ENCODE measurements at regions of chr6 and their contacts with region 1.

Region 1: DNA sequence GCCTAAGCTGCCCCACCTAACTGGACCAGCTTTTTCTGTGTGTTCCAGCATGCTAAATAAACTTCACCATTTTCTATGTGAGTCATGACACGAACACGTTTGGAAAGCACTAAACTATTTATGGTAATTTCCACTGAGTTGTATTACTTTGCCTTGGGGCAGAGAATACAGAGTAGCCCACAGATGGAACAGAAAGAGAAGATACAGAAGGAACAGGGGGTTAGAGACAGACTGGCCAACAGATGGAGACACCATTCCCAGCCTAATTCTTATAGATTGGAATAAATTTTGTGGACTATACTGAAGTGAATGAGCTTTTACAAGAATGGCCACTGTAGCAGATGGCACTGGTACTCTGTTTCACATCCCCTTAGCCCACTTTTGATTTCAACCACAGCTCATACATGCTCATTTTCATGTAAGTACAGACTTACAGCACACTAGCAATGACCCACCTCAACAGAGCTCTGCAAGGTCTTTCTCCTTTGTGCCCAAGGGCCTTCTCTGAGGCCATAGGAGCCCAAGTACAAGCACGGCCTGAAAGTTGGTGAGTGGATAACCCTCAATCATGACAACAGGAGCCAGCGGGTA is 13.1 kb upstream of the NT5DC1 start:
- DNase-seq: peak; percentile 92
- ATAC-seq: peak; percentile 92
- H3K4me3 ChIP-seq: peak overlapping the region; percentile 15; the same call in 1 of the 2 replicates
- H3K27ac ChIP-seq: peak overlapping the region; percentile 98
- H3K4me1 ChIP-seq: peaks cover 57% of the 10 kb centered on the region
- H3K27me3 ChIP-seq: no peaks in the 10 kb centered on the region
- CTCF ChIP-seq: no peak
- EP300 ChIP-seq: peak; percentile 45 to 80; a peak in 1 of 4 replicates
- POLR2A ChIP-seq: 0 out of 2 replicates have a peak, but pooled peaks have one; percentile 18
- RAD21 ChIP-seq: 0 out of 2 replicates have a peak, but pooled peaks have one; percentile 4

Region 2: GRCh38 chr6:115847671-115848070 is 239.9 kb before region 1 on chr6:
- CTCF ChIA-PET with region 1: no interaction called
- POLR2A ChIA-PET with region 1: no interaction called
- RAD21 ChIA-PET with region 1: no interaction called
- SMC1A ChIA-PET with region 1: no interaction called
- in situ Hi-C with region 1: no loop called
- intact Hi-C with region 1: no loop called
- DNase-seq: no peak
- ATAC-seq: no peak; the same call in none of the 3 replicates
- H3K4me3 ChIP-seq: no peak overlapping the region
- H3K27ac ChIP-seq: no peak overlapping the region
- H3K4me1 ChIP-seq: no peaks in the 10 kb centered on the region
- H3K27me3 ChIP-seq: no peaks in the 10 kb centered on the region
- CTCF ChIP-seq: no peak
- EP300 ChIP-seq: no peak
- POLR2A ChIP-seq: no peak
- RAD21 ChIP-seq: no peak

Region 3: DNA sequence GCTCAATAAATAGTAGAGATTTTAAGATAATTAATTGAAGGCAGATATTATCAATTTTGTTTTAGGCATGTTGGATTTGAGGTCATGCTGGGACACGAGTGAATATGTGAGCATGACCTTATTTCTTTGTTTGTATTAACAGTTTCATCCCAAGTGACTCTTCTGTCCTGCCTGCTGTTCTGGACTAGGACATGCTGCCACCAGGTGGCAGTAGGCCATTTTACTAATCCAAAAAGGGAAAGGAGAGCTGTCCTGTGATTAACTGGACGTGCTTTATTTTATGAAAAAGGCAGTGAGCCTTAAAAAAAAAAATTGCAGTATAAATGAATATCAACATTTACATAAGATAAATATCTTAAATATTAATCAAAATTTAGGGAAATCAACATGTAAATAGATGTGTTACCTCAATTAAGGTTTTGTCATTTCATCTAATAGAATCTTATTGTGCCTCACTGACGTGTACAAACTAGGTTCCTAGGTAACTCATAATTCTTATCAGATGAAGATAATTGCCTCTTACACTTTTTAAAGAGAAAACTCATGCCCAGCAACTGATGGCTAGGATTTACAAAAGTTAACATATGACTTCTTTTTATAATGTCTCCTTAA is 76.6 kb before region 1 on chr6:
- CTCF ChIA-PET with region 1: interaction called, 63 read pairs
- POLR2A ChIA-PET with region 1: interaction called, 6 read pairs
- RAD21 ChIA-PET with region 1: interaction called, 61 read pairs
- SMC1A ChIA-PET with region 1: interaction called, 101 read pairs
- in situ Hi-C with region 1: no loop called
- intact Hi-C with region 1: loop called (anchors 1 kb)
- DNase-seq: no peak
- ATAC-seq: peak; percentile 67
- H3K4me3 ChIP-seq: peak overlapping the region; percentile 9; the same call in 1 of the 2 replicates
- H3K27ac ChIP-seq: peak overlapping the region; percentile 59
- H3K4me1 ChIP-seq: peaks cover 53% of the 10 kb centered on the region
- H3K27me3 ChIP-seq: no peaks in the 10 kb centered on the region
- CTCF ChIP-seq: peak; percentile 82 to 88 (median 84)
- EP300 ChIP-seq: no peak
- POLR2A ChIP-seq: no peak
- RAD21 ChIP-seq: peak; percentile 95

Region 4: DNA sequence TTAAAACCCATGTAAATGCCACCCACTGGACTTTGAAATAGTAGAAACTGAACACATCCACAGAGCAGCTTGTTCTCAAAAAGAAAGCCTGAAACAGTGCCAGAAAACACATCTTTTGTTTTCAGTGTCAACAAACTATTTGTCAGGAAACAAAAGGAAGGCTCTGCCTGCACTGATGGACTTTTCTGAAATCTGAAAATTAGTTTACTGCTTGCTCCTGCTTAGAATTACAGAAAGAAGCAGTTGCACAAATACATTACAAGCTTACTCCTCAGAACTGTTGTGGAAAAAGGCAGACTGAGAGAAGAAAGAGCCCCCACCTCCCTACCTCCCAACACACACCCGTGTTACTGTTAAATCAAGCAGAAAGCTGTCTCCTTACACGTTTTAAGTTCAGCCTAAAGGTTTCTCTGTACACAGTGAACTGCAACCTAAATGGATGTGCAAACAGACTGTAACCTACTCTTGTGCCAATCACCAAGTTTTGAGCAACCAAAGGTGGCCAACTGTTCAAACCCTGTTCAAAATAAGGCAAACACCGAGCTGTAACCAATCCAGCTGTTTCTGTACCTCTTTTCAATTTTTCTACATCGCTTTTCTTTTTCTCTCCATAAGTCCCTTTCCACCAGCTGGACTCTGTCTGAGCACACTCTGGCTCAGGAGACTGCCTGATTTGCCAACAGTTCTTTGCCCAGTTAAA is 70.5 kb before region 1 on chr6:
- CTCF ChIA-PET with region 1: interaction called, 63 read pairs
- POLR2A ChIA-PET with region 1: interaction called, 28 read pairs
- RAD21 ChIA-PET with region 1: interaction called, 61 read pairs
- SMC1A ChIA-PET with region 1: interaction called, 101 read pairs
- in situ Hi-C with region 1: no loop called
- intact Hi-C with region 1: no loop called
- DNase-seq: no peak
- ATAC-seq: peak; percentile 27
- H3K4me3 ChIP-seq: peak overlapping the region; percentile 39; the same call in 1 of the 2 replicates
- H3K27ac ChIP-seq: peak overlapping the region; percentile 90
- H3K4me1 ChIP-seq: peaks cover 69% of the 10 kb centered on the region
- H3K27me3 ChIP-seq: no peaks in the 10 kb centered on the region
- CTCF ChIP-seq: no peak
- EP300 ChIP-seq: no peak
- POLR2A ChIP-seq: no peak
- RAD21 ChIP-seq: no peak

Region 5: GRCh38 chr6:116030770-116031169 is 56.8 kb before region 1 on chr6:
- CTCF ChIA-PET with region 1: interaction called, 5 read pairs
- POLR2A ChIA-PET with region 1: interaction called, 3 read pairs
- RAD21 ChIA-PET with region 1: interaction called, 4 read pairs
- SMC1A ChIA-PET with region 1: interaction called, 23 read pairs
- in situ Hi-C with region 1: no loop called
- intact Hi-C with region 1: no loop called
- DNase-seq: no peak
- ATAC-seq: no peak
- H3K4me3 ChIP-seq: no peak overlapping the region
- H3K27ac ChIP-seq: no peak overlapping the region
- H3K4me1 ChIP-seq: peaks cover 9% of the 10 kb centered on the region
- H3K27me3 ChIP-seq: no peaks in the 10 kb centered on the region
- CTCF ChIP-seq: no peak
- EP300 ChIP-seq: no peak
- POLR2A ChIP-seq: no peak
- RAD21 ChIP-seq: no peak

Region 6: DNA sequence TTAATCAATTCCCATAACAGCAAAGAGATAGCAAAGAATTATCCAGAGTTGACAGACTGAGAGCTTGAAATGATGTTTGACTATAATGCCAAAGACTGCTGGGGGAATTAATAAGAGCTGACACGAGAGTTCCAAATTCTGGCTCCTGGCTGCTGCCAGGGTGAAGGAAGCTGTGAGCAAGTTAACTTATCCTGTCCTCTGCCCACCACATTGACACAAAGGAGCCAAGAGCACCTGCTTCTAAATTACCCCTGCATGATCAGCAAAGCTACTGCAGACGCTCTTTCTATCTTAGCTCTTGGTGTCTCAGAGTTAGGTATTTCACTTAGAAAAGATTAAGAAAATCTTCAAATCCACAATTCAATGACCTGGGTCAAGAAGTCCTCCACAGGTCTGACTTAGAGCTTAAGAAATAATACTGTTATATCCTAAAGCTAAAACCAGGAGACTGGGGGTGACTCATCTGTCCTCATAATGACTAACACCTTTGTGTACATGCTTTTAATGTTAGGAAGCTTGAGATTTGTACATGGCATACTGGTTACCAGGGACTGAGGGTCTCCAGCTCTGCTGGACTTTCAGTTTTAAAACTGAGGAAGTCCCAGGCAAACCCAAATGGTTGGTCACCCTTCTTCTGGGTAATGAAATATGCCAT is 13.6 kb before region 1 on chr6:
- CTCF ChIA-PET with region 1: interaction called, 6 read pairs
- POLR2A ChIA-PET with region 1: no interaction called
- RAD21 ChIA-PET with region 1: interaction called, 9 read pairs
- SMC1A ChIA-PET with region 1: interaction called, 68 read pairs
- in situ Hi-C with region 1: no loop called
- intact Hi-C with region 1: no loop called
- DNase-seq: no peak
- ATAC-seq: no peak
- H3K4me3 ChIP-seq: no peak overlapping the region
- H3K27ac ChIP-seq: no peak overlapping the region
- H3K4me1 ChIP-seq: no peaks in the 10 kb centered on the region
- H3K27me3 ChIP-seq: no peaks in the 10 kb centered on the region
- CTCF ChIP-seq: no peak
- EP300 ChIP-seq: no peak
- POLR2A ChIP-seq: no peak
- RAD21 ChIP-seq: no peak

Region 7: GRCh38 chr6:116190550-116190949 is 103.0 kb after region 1 on chr6:
- CTCF ChIA-PET with region 1: no interaction called
- POLR2A ChIA-PET with region 1: no interaction called
- RAD21 ChIA-PET with region 1: no interaction called
- SMC1A ChIA-PET with region 1: no interaction called
- in situ Hi-C with region 1: no loop called
- intact Hi-C with region 1: no loop called
- DNase-seq: no peak
- ATAC-seq: no peak
- H3K4me3 ChIP-seq: no peak overlapping the region
- H3K27ac ChIP-seq: no peak overlapping the region
- H3K4me1 ChIP-seq: no peaks in the 10 kb centered on the region
- H3K27me3 ChIP-seq: no peaks in the 10 kb centered on the region
- CTCF ChIP-seq: no peak
- EP300 ChIP-seq: no peak
- POLR2A ChIP-seq: no peak
- RAD21 ChIP-seq: no peak

Region 8: DNA sequence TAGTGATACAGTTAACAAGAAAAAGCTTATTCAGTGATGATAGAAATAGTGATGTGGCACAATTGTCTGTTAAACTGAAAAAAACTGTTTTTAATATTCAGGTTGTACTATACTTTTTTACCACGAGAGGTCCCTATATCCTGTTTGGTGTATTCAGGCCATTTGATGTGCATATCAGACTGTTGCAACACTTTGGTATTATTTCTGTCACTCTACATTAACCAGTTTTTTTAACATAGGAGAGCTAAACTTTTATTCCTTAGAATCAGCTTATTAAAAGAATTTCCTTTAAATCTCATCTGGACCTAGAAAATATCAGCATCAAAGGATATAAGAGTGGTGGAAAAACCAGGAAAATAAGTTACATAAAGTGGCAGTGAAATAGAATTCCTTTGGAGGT is 129.5 kb after region 1 on chr6:
- CTCF ChIA-PET with region 1: no interaction called
- POLR2A ChIA-PET with region 1: no interaction called
- RAD21 ChIA-PET with region 1: no interaction called
- SMC1A ChIA-PET with region 1: no interaction called
- in situ Hi-C with region 1: no loop called
- intact Hi-C with region 1: no loop called
- DNase-seq: no peak
- ATAC-seq: peak; percentile 69
- H3K4me3 ChIP-seq: no peak overlapping the region
- H3K27ac ChIP-seq: no peak overlapping the region
- H3K4me1 ChIP-seq: no peaks in the 10 kb centered on the region
- H3K27me3 ChIP-seq: no peaks in the 10 kb centered on the region
- CTCF ChIP-seq: peak in 2 of 3 experiments; percentile 30 to 41; a peak in 3 of 6 replicates
- EP300 ChIP-seq: no peak
- POLR2A ChIP-seq: no peak
- RAD21 ChIP-seq: peak; percentile 31; the same call in 1 of the 2 replicates

Measured in GM12878 (cell line).